K562 (cell line): ENCODE measurements at regions of chr3 and their contacts with region 1.

Region 1: DNA sequence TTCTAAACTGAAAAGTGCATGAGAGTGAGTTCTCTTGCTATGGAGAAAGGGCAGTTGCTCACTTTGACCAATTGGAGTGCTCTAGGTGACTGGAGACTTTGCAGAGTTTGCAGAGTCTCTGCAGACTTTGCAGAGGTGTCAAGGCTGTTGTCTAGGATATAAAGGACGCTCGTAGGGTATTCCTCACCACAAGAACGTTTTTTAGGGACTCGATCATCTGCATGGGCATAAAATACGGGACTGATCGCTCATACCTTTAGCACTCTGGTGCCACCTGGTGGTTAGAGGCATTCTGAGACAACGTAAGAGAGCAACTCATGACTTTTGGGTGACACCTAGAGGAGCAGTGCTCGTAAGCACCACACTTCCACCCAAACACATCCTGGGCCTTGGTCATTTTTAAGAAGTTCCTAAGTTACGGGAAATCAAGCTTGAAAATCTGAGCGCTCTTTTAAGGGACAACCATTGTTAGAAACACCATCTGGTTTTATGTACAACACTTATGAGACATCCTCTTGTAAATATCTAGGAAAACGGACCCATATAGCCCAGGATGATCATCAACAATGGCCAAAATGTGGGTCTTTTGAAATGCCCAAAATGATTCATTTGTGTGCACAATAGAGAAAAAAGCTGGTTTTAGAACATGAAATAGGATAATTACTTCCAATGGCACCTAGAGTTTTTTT is 51.6 kb upstream of the XCR1 start:
- DNase-seq: peak; percentile 86 to 94 (median 88)
- ATAC-seq: peak; percentile 100
- H3K4me3 ChIP-seq: no peak overlapping the region
- H3K27ac ChIP-seq: no peak overlapping the region
- H3K4me1 ChIP-seq: no peaks in the 10 kb centered on the region; a peak in 1 of 5 replicates
- H3K27me3 ChIP-seq: peaks cover 0 to 3% of the 10 kb centered on the region in 2 experiments; a peak in 2 of 5 replicates
- CTCF ChIP-seq: peak; percentile 100
- EP300 ChIP-seq: no peak
- POLR2A ChIP-seq: no peak
- RAD21 ChIP-seq: peak; percentile 100

Region 2: GRCh38 chr3:45516829-45517228 is 562.0 kb before region 1 on chr3:
- CTCF ChIA-PET with region 1: interaction called, 21 read pairs
- POLR2A ChIA-PET with region 1: no interaction called
- in situ Hi-C with region 1: no loop called
- intact Hi-C with region 1: loop called (anchors 10 kb)
- DNase-seq: no peak
- ATAC-seq: no peak
- H3K4me3 ChIP-seq: no peak overlapping the region
- H3K27ac ChIP-seq: no peak overlapping the region
- H3K4me1 ChIP-seq: no peaks in the 10 kb centered on the region
- H3K27me3 ChIP-seq: no peaks in the 10 kb centered on the region
- CTCF ChIP-seq: no peak
- EP300 ChIP-seq: no peak
- POLR2A ChIP-seq: no peak
- RAD21 ChIP-seq: no peak

Region 3: DNA sequence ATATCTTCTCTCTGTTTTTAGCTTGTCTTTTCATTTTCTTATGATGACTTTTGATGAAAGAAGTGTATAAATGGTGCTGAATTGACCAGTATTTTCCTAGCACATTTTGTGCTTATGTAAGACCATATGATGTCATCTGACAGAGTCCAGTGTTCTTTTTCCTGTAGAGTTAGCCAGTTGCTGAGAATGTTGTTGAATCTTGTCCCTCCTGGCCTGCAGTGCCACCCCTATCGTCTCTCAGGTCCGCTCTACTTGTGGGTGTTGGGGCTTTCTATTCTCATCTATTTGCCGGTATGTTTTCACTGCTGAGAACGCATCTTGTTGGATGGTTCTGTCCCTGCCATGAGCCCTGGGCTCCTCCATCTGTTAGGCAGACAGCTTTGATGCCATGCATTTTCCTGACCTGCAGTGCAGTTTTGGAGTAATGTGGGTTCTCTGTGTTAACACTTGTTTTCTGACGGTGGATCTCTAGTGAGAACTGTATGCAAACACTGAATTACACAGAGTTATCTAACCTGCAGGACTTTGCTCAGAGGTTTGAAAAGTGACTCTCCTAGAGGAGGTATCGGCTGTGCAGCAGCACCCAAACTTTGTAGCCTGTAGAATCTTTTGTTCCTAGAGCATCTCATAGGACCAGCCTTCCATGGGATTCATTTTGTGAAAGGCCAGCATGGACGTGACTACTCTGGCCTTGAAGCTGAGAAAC is 327.2 kb before region 1 on chr3:
- CTCF ChIA-PET with region 1: no interaction called
- POLR2A ChIA-PET with region 1: no interaction called
- in situ Hi-C with region 1: loop called (anchors 10 kb)
- intact Hi-C with region 1: no loop called
- DNase-seq: no peak
- ATAC-seq: no peak
- H3K4me3 ChIP-seq: no peak overlapping the region
- H3K27ac ChIP-seq: no peak overlapping the region
- H3K4me1 ChIP-seq: no peaks in the 10 kb centered on the region; a peak in 1 of 5 replicates
- H3K27me3 ChIP-seq: peaks cover 18 to 34% of the 10 kb centered on the region in 2 experiments
- CTCF ChIP-seq: no peak
- EP300 ChIP-seq: no peak
- POLR2A ChIP-seq: no peak
- RAD21 ChIP-seq: no peak

Region 4: GRCh38 chr3:45938864-45939263 is 140.0 kb before region 1 on chr3:
- CTCF ChIA-PET with region 1: interaction called, 123 read pairs
- POLR2A ChIA-PET with region 1: interaction called, 5 read pairs
- in situ Hi-C with region 1: loop called (anchors 5 kb)
- intact Hi-C with region 1: loop called (anchors 1 kb)
- DNase-seq: peak; percentile 74 to 89 (median 79)
- ATAC-seq: peak; percentile 94
- H3K4me3 ChIP-seq: no peak overlapping the region
- H3K27ac ChIP-seq: no peak overlapping the region
- H3K4me1 ChIP-seq: peaks cover 4 to 6% of the 10 kb centered on the region in 2 experiments; a peak in 1 of 5 replicates
- H3K27me3 ChIP-seq: no peaks in the 10 kb centered on the region
- CTCF ChIP-seq: peak; percentile 93 to 96 (median 95)
- EP300 ChIP-seq: no peak
- POLR2A ChIP-seq: no peak
- RAD21 ChIP-seq: peak; percentile 93 to 94

Region 5: GRCh38 chr3:46325645-46326585 is 247.1 kb after region 1 on chr3:
- CTCF ChIA-PET with region 1: no interaction called
- POLR2A ChIA-PET with region 1: no interaction called
- in situ Hi-C with region 1: no loop called
- intact Hi-C with region 1: no loop called
- DNase-seq: no peak
- ATAC-seq: no peak
- H3K4me3 ChIP-seq: no peak overlapping the region
- H3K27ac ChIP-seq: no peak overlapping the region
- H3K4me1 ChIP-seq: no peaks in the 10 kb centered on the region
- H3K27me3 ChIP-seq: no peaks in the 10 kb centered on the region
- CTCF ChIP-seq: no peak
- EP300 ChIP-seq: no peak
- POLR2A ChIP-seq: no peak
- RAD21 ChIP-seq: no peak

Region 6: GRCh38 chr3:46378426-46378942 is 299.6 kb after region 1 on chr3:
- CTCF ChIA-PET with region 1: interaction called, 5 read pairs
- POLR2A ChIA-PET with region 1: no interaction called
- in situ Hi-C with region 1: no loop called
- intact Hi-C with region 1: loop called (anchors 5 kb)
- DNase-seq: peak; percentile 63 to 80 (median 68)
- ATAC-seq: peak; percentile 96
- H3K4me3 ChIP-seq: no peak overlapping the region
- H3K27ac ChIP-seq: no peak overlapping the region
- H3K4me1 ChIP-seq: no peaks in the 10 kb centered on the region; a peak in 2 of 5 replicates
- H3K27me3 ChIP-seq: peaks cover 11 to 24% of the 10 kb centered on the region in 2 experiments; a peak in 4 of 5 replicates
- CTCF ChIP-seq: peak; percentile 85 to 91 (median 90)
- EP300 ChIP-seq: no peak
- POLR2A ChIP-seq: no peak
- RAD21 ChIP-seq: peak; percentile 88 to 89